ENCODE measurements at regions of chr2 and their contacts with region 1.

Region 1: DNA sequence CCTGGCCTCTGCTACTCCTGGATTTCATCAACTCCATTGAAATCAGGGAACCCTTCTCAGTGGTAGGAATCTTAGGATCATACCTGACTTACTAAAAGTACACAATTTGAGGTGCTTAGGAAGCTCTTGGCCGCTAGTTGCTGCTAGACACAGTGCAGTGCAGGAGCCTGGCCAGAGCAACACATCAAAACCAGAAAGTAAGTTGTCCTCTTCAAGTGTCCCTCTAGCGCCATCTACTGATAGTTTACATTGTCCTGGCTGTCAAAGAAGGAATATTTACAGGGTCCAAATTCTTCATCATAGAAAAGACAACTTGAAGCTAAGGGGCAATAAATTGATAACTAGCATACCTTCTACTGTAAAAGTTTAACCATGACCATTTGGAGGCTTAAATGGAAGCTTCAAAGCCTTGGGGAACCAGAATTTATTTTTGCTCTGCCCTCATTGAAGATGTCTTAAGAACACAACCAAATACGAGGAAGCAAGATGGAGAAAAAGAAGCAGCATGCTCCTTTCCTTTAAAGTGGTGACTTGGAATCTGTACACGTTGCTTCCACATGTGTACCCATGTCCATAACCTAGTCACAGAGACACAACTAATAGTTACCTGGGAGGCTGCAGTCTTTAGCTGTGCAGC is 889.1 kb upstream of the GCFC2 start:
- DNase-seq: peak; percentile 54
- ATAC-seq: peak; percentile 90
- H3K4me3 ChIP-seq: no peak overlapping the region
- H3K27ac ChIP-seq: no peak overlapping the region
- H3K4me1 ChIP-seq: no peaks in the 10 kb centered on the region
- H3K27me3 ChIP-seq: no peaks in the 10 kb centered on the region
- CTCF ChIP-seq: peak; percentile 82

Region 2: DNA sequence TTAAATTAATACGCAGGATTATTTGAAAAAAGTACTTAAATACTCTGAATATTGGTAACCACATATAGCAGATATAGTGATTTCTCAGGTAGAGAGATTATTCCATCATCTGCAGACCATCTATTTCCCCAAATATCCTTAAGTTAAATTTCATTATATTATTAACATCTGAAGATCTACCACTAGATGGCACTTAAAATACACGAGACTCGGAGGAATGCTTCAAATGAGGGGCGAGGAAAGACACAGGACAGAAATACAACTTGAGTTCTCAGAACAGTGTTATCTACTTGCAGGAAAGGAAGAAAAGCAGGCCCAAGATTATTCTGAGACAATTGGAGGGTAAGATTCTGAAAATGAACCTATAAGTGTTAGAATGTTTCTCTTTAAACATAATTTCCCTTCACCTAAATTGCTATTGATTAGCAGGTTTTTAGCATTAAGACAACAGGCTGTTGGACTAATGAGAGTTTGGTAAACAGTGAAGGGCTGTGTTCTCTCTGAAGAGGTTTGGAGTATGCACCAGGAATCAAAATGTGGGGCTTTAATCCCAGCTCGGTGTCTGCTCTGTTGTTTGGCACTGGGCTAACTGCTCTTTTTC is 812.2 kb before region 1 on chr2:
- CTCF ChIA-PET with region 1: no interaction called
- POLR2A ChIA-PET with region 1: no interaction called
- in situ Hi-C with region 1: no loop called
- intact Hi-C with region 1: loop called (anchors 2 kb)
- DNase-seq: no peak
- ATAC-seq: no peak
- H3K4me3 ChIP-seq: no peak overlapping the region
- H3K27ac ChIP-seq: no peak overlapping the region
- H3K4me1 ChIP-seq: no peaks in the 10 kb centered on the region
- H3K27me3 ChIP-seq: no peaks in the 10 kb centered on the region
- CTCF ChIP-seq: peak; percentile 64

Region 3: GRCh38 chr2:76197842-76198448 is 401.9 kb before region 1 on chr2:
- CTCF ChIA-PET with region 1: no interaction called
- POLR2A ChIA-PET with region 1: no interaction called
- in situ Hi-C with region 1: no loop called
- intact Hi-C with region 1: loop called (anchors 2 kb)
- DNase-seq: peak; percentile 51
- ATAC-seq: peak; percentile 75
- H3K4me3 ChIP-seq: no peak overlapping the region
- H3K27ac ChIP-seq: no peak overlapping the region
- H3K4me1 ChIP-seq: no peaks in the 10 kb centered on the region
- H3K27me3 ChIP-seq: no peaks in the 10 kb centered on the region
- CTCF ChIP-seq: peak; percentile 76

Region 4: DNA sequence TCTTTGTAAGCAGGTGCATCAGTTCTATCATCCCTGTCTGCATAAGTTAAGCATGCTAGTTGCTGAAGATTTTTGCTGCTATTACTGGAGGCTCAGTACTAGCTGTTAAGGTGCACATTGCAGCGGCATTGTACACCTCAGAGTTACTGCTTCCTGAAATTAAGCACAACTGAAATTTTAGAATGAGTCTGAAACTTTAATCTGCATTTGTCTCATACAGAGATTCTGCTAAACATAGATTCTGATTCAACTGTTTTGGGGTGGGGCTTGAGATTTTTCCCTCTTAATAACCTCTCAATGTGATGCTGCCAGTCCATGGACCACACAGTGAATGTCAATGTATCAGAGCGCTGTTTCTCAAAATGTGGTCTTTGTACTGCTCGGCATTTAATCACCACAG is 303.4 kb before region 1 on chr2:
- CTCF ChIA-PET with region 1: no interaction called
- POLR2A ChIA-PET with region 1: no interaction called
- in situ Hi-C with region 1: no loop called
- intact Hi-C with region 1: no loop called
- DNase-seq: no peak
- ATAC-seq: no peak
- H3K4me3 ChIP-seq: no peak overlapping the region
- H3K27ac ChIP-seq: no peak overlapping the region
- H3K4me1 ChIP-seq: no peaks in the 10 kb centered on the region
- H3K27me3 ChIP-seq: no peaks in the 10 kb centered on the region
- CTCF ChIP-seq: no peak

Region 5: GRCh38 chr2:77469106-77469505 is 869.3 kb after region 1 on chr2:
- CTCF ChIA-PET with region 1: no interaction called
- POLR2A ChIA-PET with region 1: no interaction called
- in situ Hi-C with region 1: no loop called
- intact Hi-C with region 1: no loop called
- DNase-seq: no peak
- ATAC-seq: no peak
- H3K4me3 ChIP-seq: no peak overlapping the region
- H3K27ac ChIP-seq: no peak overlapping the region
- H3K4me1 ChIP-seq: no peaks in the 10 kb centered on the region
- H3K27me3 ChIP-seq: no peaks in the 10 kb centered on the region
- CTCF ChIP-seq: no peak

Measured in Panc1 (cell line).